ENCODE measurements at regions of chr6 and their contacts with region 1.

Region 1: GRCh38 chr6:42166444-42167141 is 6.6 kb upstream of the GUCA1A start:
- DNase-seq: peak; percentile 92 to 96 (median 94)
- ATAC-seq: peak; percentile 93
- H3K4me3 ChIP-seq: no peak overlapping the region
- H3K27ac ChIP-seq: peak overlapping the region; percentile 38; the same call in 2 of the 3 replicates
- H3K4me1 ChIP-seq: peaks cover 4 to 6% of the 10 kb centered on the region in 2 experiments; a peak in 1 of 5 replicates
- H3K27me3 ChIP-seq: peaks cover 5 to 24% of the 10 kb centered on the region in 2 experiments; a peak in 3 of 5 replicates
- CTCF ChIP-seq: peak; percentile 93 to 99 (median 94)
- EP300 ChIP-seq: no peak
- POLR2A ChIP-seq: no peak
- RAD21 ChIP-seq: peak; percentile 98

Region 2: GRCh38 chr6:41779793-41780545 is 386.6 kb before region 1 on chr6 and contains the start of gene FRS3:
- CTCF ChIA-PET with region 1: interaction called, 8 read pairs
- POLR2A ChIA-PET with region 1: no interaction called
- in situ Hi-C with region 1: no loop called
- intact Hi-C with region 1: loop called (anchors 1 kb)
- DNase-seq: peak; percentile 98 to 99 (median 98)
- ATAC-seq: peak; percentile 94
- H3K4me3 ChIP-seq: peak within 1 kb of the TSS; percentile 69
- H3K27ac ChIP-seq: peak within 1 kb of the TSS; percentile 51; the same call in 2 of the 3 replicates
- H3K4me1 ChIP-seq: peaks cover 17 to 27% of the 10 kb centered on the region in 2 experiments
- H3K27me3 ChIP-seq: no peaks in the 10 kb centered on the region
- CTCF ChIP-seq: peak; percentile 94 to 99 (median 98)
- EP300 ChIP-seq: peak; percentile 44
- POLR2A ChIP-seq: no peak
- RAD21 ChIP-seq: peak; percentile 99
- polyA plus RNA-seq, gene FRS3: 0.03 to 0.06 TPM

Region 3: GRCh38 chr6:41970436-41970846 is 196.2 kb before region 1 on chr6:
- CTCF ChIA-PET with region 1: no interaction called
- POLR2A ChIA-PET with region 1: no interaction called
- in situ Hi-C with region 1: no loop called
- intact Hi-C with region 1: no loop called
- DNase-seq: no peak
- ATAC-seq: no peak
- H3K4me3 ChIP-seq: no peak overlapping the region
- H3K27ac ChIP-seq: no peak overlapping the region
- H3K4me1 ChIP-seq: peaks cover 0 to 27% of the 10 kb centered on the region in 2 experiments; a peak in 4 of 5 replicates
- H3K27me3 ChIP-seq: no peaks in the 10 kb centered on the region
- CTCF ChIP-seq: no peak
- EP300 ChIP-seq: no peak
- POLR2A ChIP-seq: no peak
- RAD21 ChIP-seq: no peak

Region 4: DNA sequence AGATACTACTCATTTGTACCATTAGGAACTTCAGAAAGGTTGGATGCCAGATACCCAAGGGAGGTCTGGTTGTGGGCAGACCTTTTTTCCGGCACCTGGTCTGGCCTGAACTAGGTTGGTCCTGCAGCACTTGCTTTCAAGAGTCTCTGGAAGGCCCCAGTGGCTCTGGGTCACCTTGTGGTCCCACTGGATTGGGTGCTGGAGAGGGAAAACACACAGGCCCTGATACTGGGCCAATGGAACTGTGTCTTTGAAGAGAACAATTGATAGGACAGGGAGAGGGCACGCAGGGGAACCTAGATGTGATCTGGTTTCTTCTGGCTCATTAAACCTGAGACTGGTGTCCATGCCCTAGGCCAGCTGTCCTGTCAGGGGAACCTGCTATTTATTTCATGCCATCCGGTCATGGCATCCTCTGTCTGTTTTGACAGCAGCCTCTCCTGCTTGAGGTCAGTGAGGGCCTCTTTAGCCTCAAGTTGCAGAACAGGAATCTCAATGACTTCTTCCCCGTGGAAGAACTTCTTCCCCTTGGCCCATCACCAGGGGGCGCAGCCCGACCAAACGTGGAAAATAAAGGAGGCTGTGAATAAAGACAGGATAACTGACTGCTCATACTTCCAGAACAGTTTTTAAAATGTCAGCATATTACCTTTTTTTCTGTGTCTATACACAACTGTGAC is 91.3 kb before region 1 on chr6:
- CTCF ChIA-PET with region 1: interaction called, 77 read pairs
- POLR2A ChIA-PET with region 1: no interaction called
- in situ Hi-C with region 1: loop called (anchors 5 kb)
- intact Hi-C with region 1: loop called (anchors 1 kb)
- DNase-seq: peak; percentile 70 to 86 (median 77)
- ATAC-seq: peak; percentile 90
- H3K4me3 ChIP-seq: no peak overlapping the region
- H3K27ac ChIP-seq: no peak overlapping the region
- H3K4me1 ChIP-seq: no peaks in the 10 kb centered on the region
- H3K27me3 ChIP-seq: no peaks in the 10 kb centered on the region
- CTCF ChIP-seq: peak; percentile 94 to 98 (median 95)
- EP300 ChIP-seq: no peak
- POLR2A ChIP-seq: no peak
- RAD21 ChIP-seq: peak; percentile 99

Region 5: DNA sequence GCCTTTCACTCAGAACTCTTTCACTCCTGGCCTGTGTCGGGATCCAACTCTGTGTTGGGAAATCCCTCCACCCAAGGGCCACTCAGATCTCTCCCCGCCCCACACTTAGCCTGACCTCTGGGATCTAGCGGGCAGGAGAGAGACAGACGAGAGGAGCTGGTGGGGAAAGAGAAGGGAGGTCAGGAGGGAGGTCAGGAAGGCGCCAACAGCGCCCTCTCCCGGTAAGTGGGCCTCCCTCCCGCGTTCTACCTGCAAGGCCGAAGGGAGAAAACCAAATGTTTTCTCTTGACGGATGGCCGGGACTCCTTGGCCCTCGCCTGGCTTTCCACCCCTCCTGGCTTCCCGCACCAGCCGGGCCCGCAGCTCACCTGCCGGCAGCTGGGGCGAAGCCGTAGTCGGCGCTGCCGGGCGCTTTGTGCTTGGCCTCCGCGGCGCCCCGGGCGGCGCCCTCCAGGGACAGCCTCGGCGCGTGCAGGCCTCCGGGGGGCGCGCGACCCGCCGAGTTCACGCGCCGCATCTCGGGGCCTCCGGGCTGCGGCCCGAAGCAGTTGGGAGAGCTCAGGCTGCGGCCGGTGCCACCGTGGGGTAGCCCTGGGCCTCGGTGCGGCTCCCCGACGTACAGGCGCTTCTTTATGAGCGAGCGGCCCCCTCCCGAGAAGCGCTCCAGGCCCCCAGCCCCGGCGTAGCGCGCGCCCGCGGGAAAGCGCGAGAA is 62.3 kb before region 1 on chr6:
- CTCF ChIA-PET with region 1: interaction called, 4 read pairs
- POLR2A ChIA-PET with region 1: interaction called, 3 read pairs
- in situ Hi-C with region 1: no loop called
- intact Hi-C with region 1: loop called (anchors 1 kb)
- DNase-seq: peak; percentile 93 to 96 (median 94)
- ATAC-seq: peak; percentile 88
- H3K4me3 ChIP-seq: peak overlapping the region; percentile 50
- H3K27ac ChIP-seq: peak overlapping the region; percentile 74
- H3K4me1 ChIP-seq: peaks cover 43 to 56% of the 10 kb centered on the region in 2 experiments
- H3K27me3 ChIP-seq: peaks cover 3 to 6% of the 10 kb centered on the region in 2 experiments; a peak in 2 of 5 replicates
- CTCF ChIP-seq: peak; percentile 89 to 99 (median 94)
- EP300 ChIP-seq: no peak
- POLR2A ChIP-seq: peak; percentile 79
- RAD21 ChIP-seq: peak; percentile 84 to 85

Region 6: DNA sequence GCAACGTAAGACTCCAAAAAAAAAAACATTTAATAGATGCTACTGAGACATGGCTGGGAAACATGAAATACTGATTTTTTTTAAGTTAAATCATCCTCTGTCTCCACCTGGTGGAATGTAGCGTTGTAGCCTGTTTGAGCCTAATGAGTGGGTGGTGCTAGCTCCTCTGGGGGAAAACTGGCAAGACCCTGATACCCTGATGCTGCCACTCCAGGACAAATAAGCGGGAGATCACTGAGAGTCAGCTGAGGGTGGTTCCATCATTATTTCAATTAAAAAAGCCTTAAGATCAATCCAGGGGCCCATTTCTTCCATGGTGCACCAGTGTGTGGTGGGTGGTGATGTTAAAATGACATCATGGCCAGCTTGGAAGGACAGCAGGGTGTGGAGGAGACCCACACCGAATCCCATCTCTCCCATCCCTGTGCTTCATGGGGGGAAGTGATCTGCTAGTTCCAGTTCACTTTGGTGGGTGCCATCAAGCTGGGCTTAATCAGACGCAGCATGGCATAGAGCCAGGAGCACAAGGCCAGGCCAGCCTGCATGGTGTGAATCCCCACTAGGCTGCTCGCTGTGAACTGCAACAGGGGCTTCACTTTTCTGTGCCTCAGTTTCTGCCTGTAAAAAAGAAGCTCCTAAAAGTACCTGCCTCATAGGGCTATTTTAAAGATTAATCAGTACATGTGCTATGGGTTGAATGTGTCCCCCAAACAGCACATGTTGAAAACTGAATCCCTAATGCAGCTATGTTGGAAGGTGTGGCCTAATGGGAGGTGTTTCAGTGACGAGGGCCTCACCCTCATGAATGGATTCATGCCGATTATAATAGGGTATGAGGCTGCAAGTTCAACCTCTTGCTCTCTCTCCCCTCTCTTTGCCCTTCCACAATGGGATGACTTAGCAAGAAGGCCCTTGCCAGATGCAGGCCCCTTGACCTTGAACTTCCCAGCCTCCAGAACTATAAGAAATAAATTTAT is 64.0 kb after region 1 on chr6:
- CTCF ChIA-PET with region 1: interaction called, 38 read pairs
- POLR2A ChIA-PET with region 1: no interaction called
- in situ Hi-C with region 1: no loop called
- intact Hi-C with region 1: loop called (anchors 1 kb)
- DNase-seq: peak in 3 of 4 experiments; percentile 40 to 68 (median 58)
- ATAC-seq: peak; percentile 69
- H3K4me3 ChIP-seq: no peak overlapping the region
- H3K27ac ChIP-seq: no peak overlapping the region
- H3K4me1 ChIP-seq: peaks cover 14 to 21% of the 10 kb centered on the region in 2 experiments
- H3K27me3 ChIP-seq: no peaks in the 10 kb centered on the region
- CTCF ChIP-seq: peak; percentile 62 to 83 (median 80)
- EP300 ChIP-seq: no peak
- POLR2A ChIP-seq: no peak
- RAD21 ChIP-seq: peak; percentile 66 to 82

Region 7: GRCh38 chr6:42352856-42353564 is 186.4 kb after region 1 on chr6:
- CTCF ChIA-PET with region 1: no interaction called
- POLR2A ChIA-PET with region 1: no interaction called
- in situ Hi-C with region 1: no loop called
- intact Hi-C with region 1: no loop called
- DNase-seq: no peak
- ATAC-seq: no peak
- H3K4me3 ChIP-seq: no peak overlapping the region
- H3K27ac ChIP-seq: no peak overlapping the region
- H3K4me1 ChIP-seq: no peaks in the 10 kb centered on the region
- H3K27me3 ChIP-seq: peaks cover 15 to 44% of the 10 kb centered on the region in 2 experiments
- CTCF ChIP-seq: no peak
- EP300 ChIP-seq: no peak
- POLR2A ChIP-seq: no peak
- RAD21 ChIP-seq: no peak